B cell (primary cell): ENCODE measurements at regions of chr16 and their contacts with region 1.

Region 1: GRCh38 chr16:46689365-46690280 is at the start of gene ORC6:
- DNase-seq: peak; percentile 100
- ATAC-seq: peak; percentile 74
- H3K4me3 ChIP-seq: peak within 1 kb of the TSS; percentile 97 to 98 (median 98)
- H3K4me3 Mint-ChIP-seq: no peak within 1 kb of the TSS
- H3K27ac ChIP-seq: peak within 1 kb of the TSS; percentile 94 to 95
- H3K27ac Mint-ChIP-seq: no peak within 1 kb of the TSS
- H3K4me1 ChIP-seq: peaks cover 48 to 50% of the 10 kb centered on the region in 2 donors
- H3K4me1 Mint-ChIP-seq: peaks cover 34% of the 10 kb centered on the region
- H3K27me3 ChIP-seq: no peaks in the 10 kb centered on the region
- H3K27me3 Mint-ChIP-seq: no peaks in the 10 kb centered on the region
- CTCF ChIP-seq: peak; percentile 61
- total RNA-seq, gene ORC6: 4.7 and 7.0 TPM in 2 replicates

Region 2: GRCh38 chr16:46673320-46674013 is 16.2 kb before region 1 on chr16:
- CTCF ChIA-PET with region 1: interaction called, 15 read pairs
- POLR2A ChIA-PET with region 1: no interaction called
- intact Hi-C with region 1: loop called (anchors 2 kb)
- DNase-seq: peak; percentile 78
- ATAC-seq: peak; percentile 92
- H3K4me3 ChIP-seq: no peak overlapping the region
- H3K4me3 Mint-ChIP-seq: no peak overlapping the region
- H3K27ac ChIP-seq: no peak overlapping the region
- H3K27ac Mint-ChIP-seq: no peak overlapping the region
- H3K4me1 ChIP-seq: no peaks in the 10 kb centered on the region
- H3K4me1 Mint-ChIP-seq: no peaks in the 10 kb centered on the region
- H3K27me3 ChIP-seq: no peaks in the 10 kb centered on the region
- H3K27me3 Mint-ChIP-seq: no peaks in the 10 kb centered on the region
- CTCF ChIP-seq: peak; percentile 97

Region 3: DNA sequence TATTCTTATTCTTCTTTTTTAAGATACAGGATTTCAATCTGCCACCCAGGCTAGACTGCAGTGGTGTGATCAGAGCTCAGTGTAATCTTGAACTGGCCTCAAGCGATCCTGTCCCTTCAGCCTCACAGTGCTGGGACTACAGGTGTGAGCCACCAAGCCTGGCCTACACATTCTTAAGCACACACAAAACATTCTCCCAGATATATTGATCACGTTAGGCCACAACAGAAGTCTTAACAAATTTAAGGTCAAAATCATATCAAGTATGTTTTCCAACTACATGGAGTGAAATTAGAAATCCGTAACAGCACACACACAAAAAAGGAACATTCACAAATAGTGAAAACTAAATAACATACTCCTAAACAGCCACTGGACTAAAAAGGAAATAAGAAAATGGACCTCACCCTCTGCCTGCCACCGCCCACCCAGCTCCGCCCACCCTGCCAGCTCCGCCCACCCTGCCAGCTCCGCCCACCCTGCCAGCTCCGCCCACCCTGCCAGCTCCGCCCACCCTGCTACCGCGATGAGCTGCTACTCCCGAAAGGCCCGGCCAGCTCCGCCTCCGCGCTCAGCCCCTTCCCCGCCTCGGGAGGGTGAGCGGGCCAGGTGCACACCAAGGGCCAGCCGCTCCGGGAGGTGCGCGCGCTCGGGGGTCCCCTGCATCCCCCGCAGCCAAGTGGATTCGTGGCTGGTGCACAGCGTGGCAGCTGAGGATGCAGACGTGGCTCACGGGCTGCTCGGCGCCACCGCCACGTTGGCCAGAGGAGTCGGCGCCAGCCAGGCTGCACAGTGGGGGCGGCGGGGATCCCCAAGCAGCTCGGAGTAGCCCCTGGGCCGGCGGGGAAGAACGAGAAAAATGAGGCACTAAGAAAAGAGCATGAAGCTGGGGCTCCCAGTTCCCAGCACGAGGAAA is 100.1 kb after region 1 on chr16:
- CTCF ChIA-PET with region 1: interaction called, 3 read pairs
- POLR2A ChIA-PET with region 1: interaction called, 3 read pairs
- intact Hi-C with region 1: loop called (anchors 1 kb)
- DNase-seq: peak; percentile 89
- ATAC-seq: peak; percentile 94
- H3K4me3 ChIP-seq: peak overlapping the region; percentile 21 to 90 (median 66)
- H3K4me3 Mint-ChIP-seq: peak overlapping the region; percentile 85
- H3K27ac ChIP-seq: peak overlapping the region; percentile 42 to 70
- H3K27ac Mint-ChIP-seq: peak overlapping the region; percentile 81
- H3K4me1 ChIP-seq: peaks cover 36 to 42% of the 10 kb centered on the region in 2 donors
- H3K4me1 Mint-ChIP-seq: peaks cover 52% of the 10 kb centered on the region
- H3K27me3 ChIP-seq: no peaks in the 10 kb centered on the region
- H3K27me3 Mint-ChIP-seq: no peaks in the 10 kb centered on the region
- CTCF ChIP-seq: no peak

Region 4: GRCh38 chr16:46830902-46831647 is 141.5 kb after region 1 on chr16 and contains the start of gene C16orf87:
- CTCF ChIA-PET with region 1: interaction called, 4 read pairs
- POLR2A ChIA-PET with region 1: no interaction called
- intact Hi-C with region 1: loop called (anchors 1 kb)
- DNase-seq: peak; percentile 97
- ATAC-seq: peak; percentile 92
- H3K4me3 ChIP-seq: peak within 1 kb of the TSS; percentile 75 to 88 (median 82)
- H3K4me3 Mint-ChIP-seq: peak within 1 kb of the TSS; percentile 95
- H3K27ac ChIP-seq: peak within 1 kb of the TSS; percentile 55 to 85
- H3K27ac Mint-ChIP-seq: peak within 1 kb of the TSS; percentile 93
- H3K4me1 ChIP-seq: peaks cover 34 to 47% of the 10 kb centered on the region in 2 donors
- H3K4me1 Mint-ChIP-seq: peaks cover 59% of the 10 kb centered on the region
- H3K27me3 ChIP-seq: no peaks in the 10 kb centered on the region
- H3K27me3 Mint-ChIP-seq: no peaks in the 10 kb centered on the region
- CTCF ChIP-seq: no peak
- total RNA-seq, gene C16orf87: 11.3 and 12.5 TPM in 2 replicates

Region 5: DNA sequence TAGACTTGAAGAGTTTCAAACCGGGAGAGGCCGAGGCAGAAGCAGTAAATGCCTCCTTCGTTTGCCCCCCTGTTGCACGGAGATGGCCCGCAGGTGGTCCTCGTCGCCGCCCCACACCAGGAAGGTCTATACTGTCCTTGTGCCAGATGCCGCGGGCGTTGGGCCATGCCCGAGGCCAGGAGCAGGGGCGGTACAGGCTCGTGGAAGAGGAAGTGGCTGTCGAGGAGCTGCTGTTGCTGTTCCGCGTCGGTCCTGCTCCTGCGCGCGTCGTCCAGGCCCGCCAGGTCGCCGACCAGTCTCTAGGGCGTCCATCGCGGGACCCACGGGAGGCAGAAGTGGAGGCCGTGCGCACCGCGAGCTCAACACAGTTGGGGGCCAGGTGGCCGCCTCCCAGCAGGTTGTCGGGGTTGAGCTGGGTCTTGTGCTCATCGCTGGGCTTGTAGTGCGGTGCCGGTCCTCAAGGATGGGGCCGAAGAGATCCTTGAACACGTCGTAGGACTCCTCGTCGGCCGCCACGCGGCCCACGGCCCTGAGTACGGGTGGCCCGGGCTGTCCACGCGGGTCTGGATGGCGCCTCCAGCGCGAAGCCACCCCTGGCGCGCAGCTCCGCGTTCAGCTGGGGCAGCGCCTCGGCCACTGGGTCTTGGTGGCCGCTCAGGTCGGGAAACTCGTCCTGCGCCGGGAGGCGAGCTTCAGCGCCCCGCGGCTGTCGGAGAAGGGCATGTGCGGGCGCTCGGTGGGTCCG is 154.4 kb after region 1 on chr16:
- CTCF ChIA-PET with region 1: no interaction called
- POLR2A ChIA-PET with region 1: no interaction called
- intact Hi-C with region 1: no loop called
- DNase-seq: peak; percentile 36
- ATAC-seq: peak; percentile 58
- H3K4me3 ChIP-seq: peak overlapping the region in 4 of 5 experiments; percentile 21 to 42 (median 33)
- H3K4me3 Mint-ChIP-seq: peak overlapping the region; percentile 77
- H3K27ac ChIP-seq: no peak overlapping the region
- H3K27ac Mint-ChIP-seq: peak overlapping the region; percentile 46
- H3K4me1 ChIP-seq: peaks cover 0 to 10% of the 10 kb centered on the region in 2 donors
- H3K4me1 Mint-ChIP-seq: no peaks in the 10 kb centered on the region
- H3K27me3 ChIP-seq: no peaks in the 10 kb centered on the region
- H3K27me3 Mint-ChIP-seq: no peaks in the 10 kb centered on the region
- CTCF ChIP-seq: no peak

Region 6: DNA sequence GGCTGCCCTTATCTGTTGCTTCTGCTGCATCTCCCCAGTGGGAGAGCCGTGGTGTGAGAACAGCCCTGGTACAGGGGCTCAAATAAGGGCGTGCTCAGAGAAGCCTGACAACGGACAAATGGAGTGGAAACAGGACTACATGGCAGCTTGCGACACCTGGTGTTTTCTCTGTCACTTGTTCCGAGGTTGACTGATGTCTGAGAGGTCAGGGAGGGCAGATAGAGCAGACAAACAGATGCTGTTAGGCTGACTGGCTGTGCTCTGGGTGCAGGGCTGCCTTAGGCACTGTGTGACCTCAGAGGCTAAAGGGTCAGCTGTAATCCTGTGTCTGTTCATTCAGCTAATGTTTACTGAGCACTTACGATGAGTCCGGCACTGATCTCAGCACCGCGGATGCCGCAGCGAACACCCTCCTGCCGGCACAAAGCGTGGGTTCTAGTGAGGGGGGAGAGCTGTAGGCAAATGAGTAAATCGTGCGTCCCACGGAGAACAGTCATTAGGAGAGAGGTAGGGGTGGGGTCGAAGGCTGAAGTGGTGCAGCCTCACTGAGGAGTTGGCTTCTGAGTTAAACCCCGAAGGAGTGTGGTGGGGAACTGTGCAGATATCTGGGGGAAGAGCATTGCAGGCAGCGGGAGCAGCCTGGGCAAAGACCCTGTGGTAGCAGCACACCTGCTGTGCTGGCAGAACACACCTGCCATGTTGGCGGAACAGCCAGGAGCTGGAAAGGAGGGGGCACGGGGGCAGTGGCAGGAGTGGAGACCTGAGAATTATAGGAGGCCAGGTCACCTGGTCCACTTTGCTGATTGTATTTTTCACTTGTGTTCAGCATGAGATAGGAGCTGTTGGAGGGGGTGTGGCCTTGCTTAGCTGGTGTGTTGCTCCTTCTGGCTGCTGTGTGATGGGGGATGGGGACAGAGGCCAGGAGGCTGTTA is 229.5 kb after region 1 on chr16:
- CTCF ChIA-PET with region 1: interaction called, 7 read pairs
- POLR2A ChIA-PET with region 1: no interaction called
- intact Hi-C with region 1: loop called (anchors 5 kb)
- DNase-seq: peak; percentile 79
- ATAC-seq: peak; percentile 62
- H3K4me3 ChIP-seq: peak overlapping the region in 3 of 5 experiments; percentile 11 to 53 (median 33)
- H3K4me3 Mint-ChIP-seq: peak overlapping the region; percentile 75
- H3K27ac ChIP-seq: peak overlapping the region; percentile 23 to 54
- H3K27ac Mint-ChIP-seq: peak overlapping the region; percentile 85
- H3K4me1 ChIP-seq: peaks cover 45 to 68% of the 10 kb centered on the region in 2 donors
- H3K4me1 Mint-ChIP-seq: peaks cover 67% of the 10 kb centered on the region
- H3K27me3 ChIP-seq: no peaks in the 10 kb centered on the region
- H3K27me3 Mint-ChIP-seq: no peaks in the 10 kb centered on the region
- CTCF ChIP-seq: peak; percentile 47

Region 7: GRCh38 chr16:48081656-48082055 is 1392.0 kb after region 1 on chr16:
- CTCF ChIA-PET with region 1: no interaction called
- POLR2A ChIA-PET with region 1: no interaction called
- intact Hi-C with region 1: no loop called
- DNase-seq: no peak
- ATAC-seq: no peak
- H3K4me3 ChIP-seq: no peak overlapping the region
- H3K4me3 Mint-ChIP-seq: no peak overlapping the region
- H3K27ac ChIP-seq: no peak overlapping the region
- H3K27ac Mint-ChIP-seq: no peak overlapping the region
- H3K4me1 ChIP-seq: no peaks in the 10 kb centered on the region
- H3K4me1 Mint-ChIP-seq: no peaks in the 10 kb centered on the region
- H3K27me3 ChIP-seq: peaks cover 0 to 6% (median 0%) of the 10 kb centered on the region in 4 experiments
- H3K27me3 Mint-ChIP-seq: peaks cover 29% of the 10 kb centered on the region
- CTCF ChIP-seq: no peak